ENCODE measurements at regions of chr11 and their contacts with region 1.

Region 1: DNA sequence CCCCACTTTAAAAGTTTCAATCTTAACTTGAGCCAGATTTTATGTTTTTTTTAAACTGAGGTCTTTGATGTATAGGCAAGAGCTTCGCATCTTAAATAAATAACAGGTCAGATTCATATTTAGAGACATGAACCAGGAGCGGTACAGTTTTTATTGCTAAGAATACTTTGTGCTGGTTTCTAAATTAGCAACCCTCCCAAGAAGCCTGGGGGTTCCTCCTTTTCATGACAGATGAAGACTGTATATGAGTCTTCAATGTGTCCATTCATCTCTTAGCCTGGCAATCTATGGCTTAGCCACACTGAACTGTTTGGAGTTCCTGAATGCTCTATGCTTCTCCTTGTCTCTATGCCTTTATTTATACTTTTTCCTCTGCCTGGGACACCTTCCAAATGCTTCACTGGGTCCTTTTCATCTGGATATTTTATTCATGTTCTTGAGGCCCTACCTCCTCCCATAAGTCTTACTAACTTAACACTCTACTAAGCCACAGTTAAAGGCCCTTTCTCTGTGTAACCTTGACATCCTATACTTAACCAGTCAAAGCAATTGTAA is 338.6 kb downstream of the INSC start:
- DNase-seq: no peak
- ATAC-seq: no peak
- H3K4me3 ChIP-seq: no peak overlapping the region
- H3K27ac ChIP-seq: no peak overlapping the region
- H3K4me1 ChIP-seq: no peaks in the 10 kb centered on the region
- H3K27me3 ChIP-seq: no peaks in the 10 kb centered on the region
- CTCF ChIP-seq: no peak
- POLR2A ChIP-seq: no peak
- RAD21 ChIP-seq: no peak

Region 2: DNA sequence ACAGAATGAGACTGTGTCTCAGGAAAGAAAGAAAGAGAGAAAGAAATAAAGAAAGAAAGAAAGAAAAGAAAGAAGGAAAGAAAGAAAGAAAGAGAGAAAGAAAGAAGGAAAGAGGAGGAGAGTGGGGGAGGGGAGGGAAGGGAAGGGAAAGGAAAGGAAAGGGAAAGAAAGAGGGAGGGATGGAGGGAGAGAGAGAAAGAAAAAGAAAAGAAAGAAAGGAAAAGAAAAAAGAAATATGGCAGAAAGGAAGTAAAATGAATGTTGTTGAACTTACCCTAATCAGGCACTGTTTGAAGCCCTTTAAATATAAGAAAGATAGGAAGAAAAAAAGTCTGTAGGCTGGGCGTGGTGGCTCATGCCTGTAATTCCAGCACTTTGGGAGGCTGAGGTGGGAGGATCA is 62.4 kb before region 1 on chr11:
- CTCF ChIA-PET with region 1: no interaction called
- POLR2A ChIA-PET with region 1: no interaction called
- dilution Hi-C with region 1: no loop called
- in situ Hi-C with region 1: no loop called
- intact Hi-C with region 1: loop called (anchors 2 kb)
- DNase-seq: no peak
- ATAC-seq: no peak
- H3K4me3 ChIP-seq: no peak overlapping the region
- H3K27ac ChIP-seq: no peak overlapping the region
- H3K4me1 ChIP-seq: no peaks in the 10 kb centered on the region
- H3K27me3 ChIP-seq: no peaks in the 10 kb centered on the region
- CTCF ChIP-seq: no peak
- POLR2A ChIP-seq: no peak
- RAD21 ChIP-seq: no peak

Measured in IMR-90 (cell line).